ENCODE measurements at regions of chr20 and their contacts with region 1.

Region 1: GRCh38 chr20:330233-331149 is 5.1 kb downstream of the SOX12 start:
- DNase-seq: peak; percentile 78
- ATAC-seq: peak; percentile 66
- H3K4me3 Mint-ChIP-seq: no peak overlapping the region
- H3K27ac Mint-ChIP-seq: no peak overlapping the region
- H3K4me1 Mint-ChIP-seq: peaks cover 17% of the 10 kb centered on the region
- H3K27me3 Mint-ChIP-seq: no peaks in the 10 kb centered on the region

Region 2: GRCh38 chr20:208942-209566 is 121.4 kb before region 1 on chr20:
- CTCF ChIA-PET with region 1: interaction called, 3 read pairs
- POLR2A ChIA-PET with region 1: no interaction called
- intact Hi-C with region 1: loop called (anchors 1 to 5 kb)
- DNase-seq: peak; percentile 26
- ATAC-seq: peak; percentile 99
- H3K4me3 Mint-ChIP-seq: no peak overlapping the region
- H3K27ac Mint-ChIP-seq: no peak overlapping the region
- H3K4me1 Mint-ChIP-seq: no peaks in the 10 kb centered on the region
- H3K27me3 Mint-ChIP-seq: peaks cover 6% of the 10 kb centered on the region

Region 3: GRCh38 chr20:219290-220115 is 111.0 kb before region 1 on chr20:
- CTCF ChIA-PET with region 1: interaction called, 13 read pairs
- POLR2A ChIA-PET with region 1: no interaction called
- intact Hi-C with region 1: no loop called
- DNase-seq: no peak
- ATAC-seq: peak; percentile 44
- H3K4me3 Mint-ChIP-seq: no peak overlapping the region
- H3K27ac Mint-ChIP-seq: no peak overlapping the region
- H3K4me1 Mint-ChIP-seq: no peaks in the 10 kb centered on the region
- H3K27me3 Mint-ChIP-seq: peaks cover 10% of the 10 kb centered on the region

Region 4: DNA sequence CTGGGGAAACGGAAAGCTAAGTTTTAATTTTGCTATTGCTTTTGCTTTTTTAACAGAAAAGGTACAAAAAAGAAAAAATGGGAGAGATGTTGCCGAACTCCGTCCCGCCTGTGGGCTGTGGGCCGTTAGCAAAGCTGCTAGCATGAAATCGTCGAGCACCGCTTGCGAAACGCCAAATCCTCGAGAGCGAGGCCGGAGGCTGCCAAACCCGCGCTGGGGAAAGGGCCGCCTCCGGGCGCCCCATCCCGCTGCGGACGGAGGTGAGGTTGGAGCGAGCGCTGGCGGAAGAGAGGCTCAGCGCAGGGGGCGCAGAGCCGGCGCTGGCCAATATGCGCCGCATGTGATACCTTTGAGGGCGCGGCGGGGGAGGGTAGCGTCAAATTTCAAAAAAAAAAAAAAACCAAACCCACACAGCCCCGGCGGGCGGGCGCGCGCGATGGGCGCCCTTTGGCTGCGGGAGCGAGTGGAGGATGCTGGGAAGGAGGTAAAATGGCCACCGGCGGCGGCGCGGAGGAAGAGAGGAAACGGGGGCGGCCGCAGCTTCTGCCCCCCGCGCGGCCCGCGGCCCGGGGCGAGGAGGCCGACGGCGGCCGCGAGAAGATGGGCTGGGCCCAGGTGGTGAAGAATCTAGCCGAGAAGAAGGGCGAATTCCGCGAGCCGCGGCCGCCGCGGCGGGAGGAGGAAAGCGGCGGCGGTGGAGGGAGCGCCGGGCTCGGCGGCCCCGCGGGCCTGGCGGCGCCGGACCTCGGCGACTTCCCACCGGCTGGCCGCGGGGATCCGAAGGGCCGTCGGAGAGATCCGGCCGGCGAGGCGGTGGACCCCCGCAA is 33.2 kb before region 1 on chr20 and contains the start of gene ZCCHC3:
- CTCF ChIA-PET with region 1: interaction called, 40 read pairs
- POLR2A ChIA-PET with region 1: interaction called, 7 read pairs
- intact Hi-C with region 1: loop called in 1 of 2 experiments (anchors 1 kb)
- DNase-seq: peak; percentile 92
- ATAC-seq: peak; percentile 81
- H3K4me3 Mint-ChIP-seq: peak within 1 kb of the TSS; percentile 100
- H3K27ac Mint-ChIP-seq: peak within 1 kb of the TSS; percentile 99
- H3K4me1 Mint-ChIP-seq: peaks cover 44% of the 10 kb centered on the region
- H3K27me3 Mint-ChIP-seq: no peaks in the 10 kb centered on the region
- total RNA-seq, gene ZCCHC3: 15.6 to 16.4 TPM

Region 5: GRCh38 chr20:347640-348484 is 17.4 kb after region 1 on chr20:
- CTCF ChIA-PET with region 1: interaction called, 16 read pairs
- POLR2A ChIA-PET with region 1: no interaction called
- intact Hi-C with region 1: loop called in 1 of 2 experiments (anchors 1 kb)
- DNase-seq: peak; percentile 78
- ATAC-seq: peak; percentile 76
- H3K4me3 Mint-ChIP-seq: peak overlapping the region; percentile 82
- H3K27ac Mint-ChIP-seq: peak overlapping the region; percentile 42
- H3K4me1 Mint-ChIP-seq: peaks cover 10% of the 10 kb centered on the region
- H3K27me3 Mint-ChIP-seq: no peaks in the 10 kb centered on the region

Region 6: GRCh38 chr20:371755-372542 is 41.5 kb after region 1 on chr20:
- CTCF ChIA-PET with region 1: no interaction called
- POLR2A ChIA-PET with region 1: no interaction called
- intact Hi-C with region 1: no loop called
- DNase-seq: no peak
- ATAC-seq: no peak
- H3K4me3 Mint-ChIP-seq: no peak overlapping the region
- H3K27ac Mint-ChIP-seq: peak overlapping the region; percentile 58
- H3K4me1 Mint-ChIP-seq: peaks cover 21% of the 10 kb centered on the region
- H3K27me3 Mint-ChIP-seq: no peaks in the 10 kb centered on the region

Region 7: GRCh38 chr20:415820-416322 is 85.4 kb after region 1 on chr20:
- CTCF ChIA-PET with region 1: no interaction called
- POLR2A ChIA-PET with region 1: no interaction called
- intact Hi-C with region 1: no loop called
- DNase-seq: no peak
- ATAC-seq: peak; percentile 12
- H3K4me3 Mint-ChIP-seq: no peak overlapping the region
- H3K27ac Mint-ChIP-seq: peak overlapping the region; percentile 73
- H3K4me1 Mint-ChIP-seq: peaks cover 48% of the 10 kb centered on the region
- H3K27me3 Mint-ChIP-seq: no peaks in the 10 kb centered on the region

Region 8: GRCh38 chr20:521860-522259 is 191.4 kb after region 1 on chr20:
- CTCF ChIA-PET with region 1: no interaction called
- POLR2A ChIA-PET with region 1: no interaction called
- intact Hi-C with region 1: no loop called
- DNase-seq: no peak
- ATAC-seq: no peak
- H3K4me3 Mint-ChIP-seq: no peak overlapping the region
- H3K27ac Mint-ChIP-seq: no peak overlapping the region
- H3K4me1 Mint-ChIP-seq: peaks cover 8% of the 10 kb centered on the region
- H3K27me3 Mint-ChIP-seq: no peaks in the 10 kb centered on the region

Measured in activated CD4-positive, alpha-beta T cell treated with anti-CD3 and anti-CD28 coated beads for 36 hours (primary cell).